ENCODE measurements at regions of chr6 and their contacts with region 1.

Region 1: DNA sequence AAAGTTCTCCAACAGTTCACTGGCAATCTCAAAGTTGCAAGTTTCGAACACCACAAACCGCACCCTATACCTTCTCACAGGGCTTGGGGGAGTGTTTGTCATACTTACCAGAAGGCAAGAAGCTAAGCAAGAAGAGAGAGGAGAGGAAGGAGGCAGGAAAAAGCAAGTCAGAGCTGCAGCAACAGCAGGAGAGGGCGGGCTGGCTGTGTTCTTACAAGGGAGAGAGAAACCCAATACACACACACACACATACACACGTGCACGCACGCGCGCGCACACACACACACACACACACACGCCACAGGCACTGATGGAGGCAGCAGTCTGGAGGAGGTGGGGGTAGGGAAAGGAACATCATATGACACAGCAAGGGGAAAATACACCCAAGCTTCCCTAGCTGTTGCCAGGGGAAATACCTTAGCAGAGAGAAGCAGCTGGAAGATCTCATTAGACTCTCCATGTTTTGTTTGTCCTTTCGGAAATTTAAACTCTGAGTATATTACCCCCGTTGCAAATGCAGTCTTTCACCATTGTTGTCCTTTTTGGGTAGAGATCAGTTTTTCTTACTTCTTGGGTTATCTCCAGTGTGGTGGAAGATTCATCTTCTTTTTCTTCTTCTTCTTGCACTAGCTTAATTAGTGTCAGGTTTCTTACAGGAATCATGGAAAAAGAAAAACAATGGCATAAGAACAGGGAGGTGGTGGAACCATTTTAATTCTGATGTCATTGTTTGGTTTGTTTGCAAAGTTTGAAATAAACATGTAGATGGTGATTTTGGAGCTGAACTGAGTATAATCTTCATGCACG is at the start of gene TXLNB:
- DNase-seq: peak; percentile 80
- H3K4me3 Mint-ChIP-seq: peak within 1 kb of the TSS; percentile 73
- H3K27ac Mint-ChIP-seq: peak within 1 kb of the TSS; percentile 98
- H3K4me1 Mint-ChIP-seq: peaks cover 84% of the 10 kb centered on the region
- H3K27me3 Mint-ChIP-seq: peaks cover 2% of the 10 kb centered on the region
- total RNA-seq, gene TXLNB: 0.08 TPM in 1 of 2 replicates, not detected in the other

Region 2: DNA sequence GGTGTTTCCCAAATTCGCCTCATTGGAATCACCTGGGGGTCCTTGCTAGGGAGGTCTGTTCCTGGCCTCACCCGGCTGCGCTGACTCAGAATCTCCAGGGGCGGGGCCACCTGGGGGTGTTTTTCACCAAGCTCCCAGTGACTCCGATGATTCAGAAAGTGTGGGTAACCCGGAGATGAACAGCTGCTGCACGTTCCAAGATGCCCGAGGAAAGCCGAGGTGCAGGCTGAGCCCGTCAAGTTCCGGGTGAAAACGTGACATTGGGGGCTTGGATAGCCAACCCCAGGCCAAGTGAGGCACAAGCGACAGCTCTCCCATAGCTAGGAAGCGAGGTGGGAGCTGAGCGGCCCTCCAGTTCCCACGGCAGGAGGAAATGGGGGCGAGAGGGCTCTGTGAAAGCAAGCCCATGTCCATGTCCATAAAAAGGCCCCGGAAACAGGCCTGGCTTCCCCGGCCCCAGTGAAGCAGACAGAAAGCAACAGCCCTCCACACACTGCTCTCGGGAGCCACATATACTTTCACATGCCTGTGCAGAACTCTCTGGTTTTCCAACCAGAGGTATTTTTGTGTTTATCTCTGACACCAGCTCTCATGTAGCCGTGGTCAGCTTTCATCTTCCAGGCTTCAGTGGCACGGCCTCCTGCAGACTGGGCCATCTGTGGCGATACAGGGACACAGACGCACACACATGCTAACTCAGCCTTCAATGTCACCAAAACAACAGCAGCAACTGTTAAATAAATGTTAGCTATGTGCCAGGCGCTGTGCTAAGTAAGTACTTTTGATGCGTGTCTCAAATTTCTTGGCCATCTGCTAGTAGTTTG is 609.1 kb before region 1 on chr6:
- intact Hi-C with region 1: no loop called
- DNase-seq: no peak
- H3K4me3 Mint-ChIP-seq: no peak overlapping the region
- H3K27ac Mint-ChIP-seq: no peak overlapping the region
- H3K4me1 Mint-ChIP-seq: no peaks in the 10 kb centered on the region
- H3K27me3 Mint-ChIP-seq: peaks cover 3% of the 10 kb centered on the region

Region 3: GRCh38 chr6:138944412-138944811 is 347.6 kb before region 1 on chr6:
- intact Hi-C with region 1: loop called (anchors 10 kb)
- DNase-seq: peak; percentile 21
- H3K4me3 Mint-ChIP-seq: peak overlapping the region; percentile 17
- H3K27ac Mint-ChIP-seq: peak overlapping the region; percentile 53
- H3K4me1 Mint-ChIP-seq: peaks cover 63% of the 10 kb centered on the region
- H3K27me3 Mint-ChIP-seq: no peaks in the 10 kb centered on the region

Region 4: DNA sequence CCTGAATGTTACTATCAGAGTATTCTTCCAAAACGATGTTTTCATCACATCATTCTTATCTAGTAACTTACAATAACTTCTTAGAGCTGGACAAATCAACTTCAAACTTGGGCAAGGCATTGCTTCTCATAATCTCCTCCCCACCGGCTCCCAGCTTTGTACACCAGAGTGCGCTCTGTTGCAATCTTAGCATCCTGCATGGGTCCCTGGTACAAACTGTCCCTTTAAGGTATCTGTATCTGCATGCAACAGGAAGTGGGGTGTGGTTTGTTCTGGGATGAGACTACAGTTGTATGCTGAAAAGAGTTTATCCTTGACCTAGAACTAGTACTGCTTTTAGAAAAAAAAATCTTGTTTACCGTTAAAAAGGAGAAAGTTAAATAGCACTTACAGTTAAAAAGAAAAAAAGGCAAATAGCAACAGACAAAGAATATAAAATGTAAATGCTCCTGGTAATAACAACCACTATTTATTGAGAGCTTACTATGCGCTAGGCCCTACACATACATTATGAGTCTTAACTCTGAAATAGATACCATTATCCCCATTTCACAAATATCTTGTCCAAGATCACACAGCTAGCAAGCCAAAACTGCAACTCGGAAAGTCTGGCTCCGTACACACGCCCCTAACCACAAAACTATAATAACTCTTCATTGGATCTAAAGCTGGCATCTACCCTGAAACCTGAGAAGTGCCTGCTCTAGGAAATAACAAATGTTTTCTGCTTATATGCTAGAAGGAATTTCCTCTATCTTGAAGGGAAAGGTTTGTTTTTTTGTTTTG is 166.9 kb before region 1 on chr6:
- intact Hi-C with region 1: loop called (anchors 1 kb)
- DNase-seq: peak; percentile 77
- H3K4me3 Mint-ChIP-seq: peak overlapping the region; percentile 47
- H3K27ac Mint-ChIP-seq: peak overlapping the region; percentile 92
- H3K4me1 Mint-ChIP-seq: peaks cover 33% of the 10 kb centered on the region
- H3K27me3 Mint-ChIP-seq: no peaks in the 10 kb centered on the region

Region 5: GRCh38 chr6:139219271-139219729 is 72.7 kb before region 1 on chr6:
- intact Hi-C with region 1: loop called (anchors 1 kb)
- DNase-seq: peak; percentile 62
- H3K4me3 Mint-ChIP-seq: peak overlapping the region; percentile 38
- H3K27ac Mint-ChIP-seq: peak overlapping the region; percentile 61
- H3K4me1 Mint-ChIP-seq: peaks cover 10% of the 10 kb centered on the region
- H3K27me3 Mint-ChIP-seq: no peaks in the 10 kb centered on the region

Region 6: GRCh38 chr6:139256087-139256486 is 35.9 kb before region 1 on chr6:
- intact Hi-C with region 1: no loop called
- DNase-seq: no peak
- H3K4me3 Mint-ChIP-seq: no peak overlapping the region
- H3K27ac Mint-ChIP-seq: no peak overlapping the region
- H3K4me1 Mint-ChIP-seq: peaks cover 47% of the 10 kb centered on the region
- H3K27me3 Mint-ChIP-seq: no peaks in the 10 kb centered on the region

Region 7: DNA sequence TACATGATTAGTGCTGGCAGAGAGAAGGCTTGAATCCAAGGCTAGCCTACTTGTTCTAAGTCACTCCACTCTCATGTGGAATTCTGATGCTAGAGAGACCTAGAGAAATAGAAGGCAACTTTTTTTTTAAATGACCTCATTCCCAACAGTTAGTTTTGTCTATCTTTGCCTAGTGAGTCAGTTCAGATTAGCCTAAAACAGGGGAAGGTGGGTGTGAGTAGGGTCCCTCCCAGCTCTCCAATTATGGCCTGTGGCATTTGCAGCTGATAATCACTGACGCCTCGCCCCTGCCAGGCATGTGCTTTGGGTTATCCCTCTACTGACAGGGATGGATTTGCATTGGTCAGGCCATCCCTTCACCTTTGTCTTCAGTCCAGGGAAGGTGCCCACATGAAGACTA is 13.8 kb before region 1 on chr6:
- intact Hi-C with region 1: loop called (anchors 1 kb)
- DNase-seq: no peak
- H3K4me3 Mint-ChIP-seq: no peak overlapping the region
- H3K27ac Mint-ChIP-seq: no peak overlapping the region
- H3K4me1 Mint-ChIP-seq: peaks cover 32% of the 10 kb centered on the region
- H3K27me3 Mint-ChIP-seq: no peaks in the 10 kb centered on the region

Region 8: GRCh38 chr6:139364302-139364981 is 72.4 kb after region 1 on chr6:
- intact Hi-C with region 1: loop called (anchors 2 kb)
- DNase-seq: no peak
- H3K4me3 Mint-ChIP-seq: no peak overlapping the region
- H3K27ac Mint-ChIP-seq: no peak overlapping the region
- H3K4me1 Mint-ChIP-seq: peaks cover 47% of the 10 kb centered on the region
- H3K27me3 Mint-ChIP-seq: peaks cover 4% of the 10 kb centered on the region

Region 9: GRCh38 chr6:140809694-140810101 is 1517.7 kb after region 1 on chr6:
- intact Hi-C with region 1: loop called (anchors 2 kb)
- DNase-seq: peak; percentile 30
- H3K4me3 Mint-ChIP-seq: no peak overlapping the region
- H3K27ac Mint-ChIP-seq: peak overlapping the region; percentile 75
- H3K4me1 Mint-ChIP-seq: peaks cover 16% of the 10 kb centered on the region
- H3K27me3 Mint-ChIP-seq: peaks cover 10% of the 10 kb centered on the region